ENCODE measurements at regions of chr10 and their contacts with region 1.

Region 1: DNA sequence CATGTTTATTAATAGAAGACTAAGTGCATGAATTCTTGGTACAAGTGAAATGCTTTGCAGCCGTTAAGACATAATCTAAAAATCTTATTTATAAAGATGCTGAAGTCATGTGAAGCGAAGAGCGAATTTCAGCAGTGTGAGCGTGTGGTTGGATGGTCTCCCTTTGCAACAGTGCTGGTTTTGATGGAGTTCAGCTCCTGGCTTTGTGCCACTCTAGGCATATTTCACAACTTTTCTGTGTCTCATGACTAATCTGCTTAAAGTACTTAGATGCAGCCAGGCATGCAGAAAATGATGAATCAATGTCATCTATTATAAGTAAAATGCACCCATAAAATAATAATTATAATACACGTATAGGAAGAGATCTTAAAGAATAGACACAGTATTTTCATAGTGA is 107.2 kb upstream of the TCERG1L start:
- DNase-seq: no peak

Region 2: GRCh38 chr10:130901311-130902165 is 517.1 kb before region 1 on chr10:
- intact Hi-C with region 1: loop called in 1 of 2 experiments (anchors 5 kb)
- DNase-seq: no peak

Region 3: DNA sequence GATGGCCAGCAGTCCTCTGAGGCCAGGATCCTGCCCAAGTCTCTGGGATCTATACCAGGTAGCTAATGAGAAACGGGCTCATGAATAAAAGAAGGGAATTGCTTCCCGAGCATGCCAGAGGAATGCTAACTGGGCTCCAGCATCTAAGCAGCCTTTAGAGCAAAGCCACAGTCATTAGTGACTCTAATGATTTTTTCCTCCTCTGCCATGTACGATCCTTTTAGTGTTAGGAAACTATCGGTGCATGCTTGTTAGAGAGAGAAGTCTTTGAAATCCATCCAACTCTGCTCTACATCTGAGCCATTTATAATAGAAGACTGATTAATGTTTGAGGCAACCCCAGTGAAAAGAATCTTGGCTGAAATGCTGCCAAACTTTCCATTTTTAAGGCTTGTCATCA is 17.8 kb after region 1 on chr10:
- intact Hi-C with region 1: no loop called
- DNase-seq: no peak

Region 4: DNA sequence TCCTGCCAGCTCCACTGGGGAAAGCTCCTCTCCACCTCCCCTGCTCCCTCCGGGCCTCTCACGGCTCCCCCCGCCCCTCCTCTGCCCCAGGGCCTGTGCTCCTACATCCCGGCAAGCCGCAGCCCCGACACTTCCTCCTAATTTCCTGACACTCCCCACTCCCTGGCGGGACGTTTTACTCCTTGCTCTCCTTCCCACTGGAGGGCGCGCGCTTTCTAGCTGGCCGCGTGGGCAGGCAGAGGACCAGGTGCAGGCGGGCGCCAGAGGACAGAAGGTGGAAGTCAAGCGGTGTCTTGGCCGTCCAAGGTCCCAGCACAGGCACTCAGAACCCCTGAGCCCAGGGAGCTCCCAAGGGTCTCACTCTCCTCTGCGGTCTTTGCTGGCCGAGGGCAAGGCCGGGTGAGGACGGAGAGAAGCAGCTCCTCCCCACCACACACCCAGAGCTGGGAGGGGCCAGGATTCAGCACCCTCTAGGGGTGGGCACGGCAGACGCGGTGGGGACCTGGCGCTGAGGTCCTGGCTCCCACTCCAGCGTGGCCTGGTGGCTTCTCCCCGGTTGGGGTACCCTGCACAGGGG is 1838.9 kb after region 1 on chr10:
- intact Hi-C with region 1: loop called in 1 of 2 experiments (anchors 10 kb)
- DNase-seq: peak; percentile 92